ENCODE measurements at regions of chr3 and their contacts with region 1.

Region 1: GRCh38 chr3:113575206-113575605 is 42.9 kb downstream of the SIDT1 start:
- DNase-seq: no peak
- ATAC-seq: no peak
- H3K4me3 ChIP-seq: no peak overlapping the region
- H3K27ac ChIP-seq: no peak overlapping the region
- H3K4me1 ChIP-seq: peaks cover 0 to 4% of the 10 kb centered on the region in 2 experiments; a peak in 2 of 4 replicates
- H3K27me3 ChIP-seq: no peaks in the 10 kb centered on the region
- CTCF ChIP-seq: no peak
- POLR2A ChIP-seq: no peak
- RAD21 ChIP-seq: no peak

Region 2: DNA sequence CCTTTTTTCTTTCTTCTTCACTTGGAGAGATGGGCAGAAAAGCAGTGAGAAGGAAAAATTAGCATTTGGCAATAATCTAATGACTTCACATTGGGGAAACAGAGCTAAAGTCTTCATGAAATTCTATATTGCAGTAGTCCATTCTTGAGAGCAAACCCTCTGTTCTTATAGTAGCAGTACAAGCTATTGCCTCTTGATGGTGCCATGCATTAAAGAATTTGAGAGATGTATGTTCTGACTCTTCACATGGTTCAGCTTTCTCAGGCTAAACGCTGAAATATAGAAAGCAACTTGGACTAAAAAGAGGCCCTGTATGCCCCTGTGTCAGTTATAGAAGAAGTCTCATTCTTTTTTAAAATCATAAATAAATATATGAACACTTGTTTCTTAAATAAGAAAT is 1680.1 kb before region 1 on chr3:
- CTCF ChIA-PET with region 1: no interaction called
- POLR2A ChIA-PET with region 1: no interaction called
- RAD21 ChIA-PET with region 1: no interaction called
- intact Hi-C with region 1: no loop called
- DNase-seq: peak; percentile 75
- ATAC-seq: peak; percentile 82
- H3K4me3 ChIP-seq: no peak overlapping the region
- H3K27ac ChIP-seq: peak overlapping the region; percentile 58
- H3K4me1 ChIP-seq: peaks cover 23 to 73% of the 10 kb centered on the region in 2 experiments; a peak in 3 of 4 replicates
- H3K27me3 ChIP-seq: no peaks in the 10 kb centered on the region
- CTCF ChIP-seq: peak in 2 of 3 experiments; percentile 64 to 81; a peak in 4 of 6 replicates
- POLR2A ChIP-seq: no peak
- RAD21 ChIP-seq: no peak

Region 3: DNA sequence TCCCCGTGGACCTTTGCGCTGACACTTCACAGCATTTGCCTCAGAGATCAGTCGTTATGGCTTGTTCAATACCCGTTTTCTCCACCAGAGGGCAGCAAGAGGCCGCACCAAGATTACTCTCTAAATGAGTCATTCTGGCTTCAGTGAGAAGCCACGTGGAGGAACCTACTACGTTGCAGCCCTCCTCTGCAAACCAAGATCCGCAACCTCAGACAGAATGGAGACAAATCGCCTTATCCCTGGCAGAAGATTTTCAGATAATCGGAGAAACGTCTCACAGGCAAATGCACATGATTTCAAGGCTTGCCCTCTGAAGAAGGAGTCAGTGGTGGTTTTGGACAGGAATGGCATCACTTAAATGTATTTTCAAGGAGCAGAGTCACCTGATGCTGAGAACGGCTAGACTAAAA is 523.9 kb before region 1 on chr3:
- CTCF ChIA-PET with region 1: interaction called, 4 read pairs
- POLR2A ChIA-PET with region 1: no interaction called
- RAD21 ChIA-PET with region 1: no interaction called
- intact Hi-C with region 1: loop called (anchors 2 kb)
- DNase-seq: peak; percentile 71
- ATAC-seq: peak; percentile 96
- H3K4me3 ChIP-seq: no peak overlapping the region
- H3K27ac ChIP-seq: no peak overlapping the region
- H3K4me1 ChIP-seq: peaks cover 3 to 8% of the 10 kb centered on the region in 2 experiments; a peak in 2 of 4 replicates
- H3K27me3 ChIP-seq: no peaks in the 10 kb centered on the region
- CTCF ChIP-seq: peak; percentile 79 to 95 (median 91)
- POLR2A ChIP-seq: no peak
- RAD21 ChIP-seq: peak; percentile 96

Region 4: DNA sequence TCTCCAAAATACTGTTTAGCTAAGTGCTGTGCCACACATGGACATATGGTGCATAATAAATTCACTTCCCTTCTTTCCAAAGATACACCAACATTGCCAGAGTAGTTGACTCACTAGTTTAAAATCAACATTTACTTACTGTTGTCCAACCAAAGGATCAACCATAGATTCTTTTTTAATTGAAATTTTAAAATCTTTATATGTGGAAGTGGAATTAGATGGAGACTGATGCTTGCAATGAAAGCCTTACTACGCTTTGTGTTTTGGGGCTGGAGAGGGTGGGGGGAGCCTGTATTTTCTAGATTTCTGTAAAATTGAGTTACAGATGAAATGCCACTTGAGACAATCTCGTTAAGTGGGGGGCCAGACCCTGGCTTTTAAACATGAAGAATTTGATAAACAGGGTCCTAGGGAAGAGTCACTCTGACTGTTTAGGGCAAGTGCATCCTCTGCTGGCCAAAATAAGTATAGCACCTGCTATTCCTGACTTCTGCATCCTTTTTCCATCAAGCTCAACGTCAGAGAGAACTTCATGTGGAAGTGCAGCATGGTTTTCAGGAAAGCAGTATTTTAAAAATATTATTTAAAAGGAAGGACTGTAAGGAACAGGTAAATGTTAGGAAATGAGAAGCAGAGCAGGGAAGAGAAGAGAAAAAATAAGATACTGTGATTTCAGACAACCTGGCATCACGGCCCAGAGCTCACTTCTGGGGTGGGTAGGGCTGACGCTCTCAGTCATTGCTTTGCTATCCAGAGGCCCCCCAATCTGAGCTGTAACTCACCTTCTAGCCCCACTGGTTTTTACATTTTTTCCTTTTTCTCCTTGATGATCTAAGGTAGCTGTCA is 287.2 kb before region 1 on chr3:
- CTCF ChIA-PET with region 1: interaction called, 9 read pairs
- POLR2A ChIA-PET with region 1: no interaction called
- RAD21 ChIA-PET with region 1: no interaction called
- intact Hi-C with region 1: loop called (anchors 2 kb)
- DNase-seq: peak; percentile 57
- ATAC-seq: peak; percentile 66
- H3K4me3 ChIP-seq: no peak overlapping the region
- H3K27ac ChIP-seq: no peak overlapping the region
- H3K4me1 ChIP-seq: peaks cover 8 to 11% of the 10 kb centered on the region in 2 experiments; a peak in 3 of 4 replicates
- H3K27me3 ChIP-seq: no peaks in the 10 kb centered on the region
- CTCF ChIP-seq: peak; percentile 94 to 97 (median 97)
- POLR2A ChIP-seq: no peak
- RAD21 ChIP-seq: peak; percentile 96

Region 5: GRCh38 chr3:113495035-113495434 is 80.2 kb before region 1 on chr3:
- CTCF ChIA-PET with region 1: interaction called, 30 read pairs
- POLR2A ChIA-PET with region 1: no interaction called
- RAD21 ChIA-PET with region 1: interaction called in 1 of 2 experiments, 4 read pairs
- intact Hi-C with region 1: loop called (anchors 1 kb)
- DNase-seq: peak; percentile 23
- ATAC-seq: peak; percentile 53; the same call in 1 of the 2 replicates
- H3K4me3 ChIP-seq: no peak overlapping the region
- H3K27ac ChIP-seq: no peak overlapping the region
- H3K4me1 ChIP-seq: no peaks in the 10 kb centered on the region
- H3K27me3 ChIP-seq: no peaks in the 10 kb centered on the region
- CTCF ChIP-seq: peak; percentile 38 to 52 (median 48); a peak in 5 of 6 replicates
- POLR2A ChIP-seq: no peak
- RAD21 ChIP-seq: peak; percentile 51

Region 6: DNA sequence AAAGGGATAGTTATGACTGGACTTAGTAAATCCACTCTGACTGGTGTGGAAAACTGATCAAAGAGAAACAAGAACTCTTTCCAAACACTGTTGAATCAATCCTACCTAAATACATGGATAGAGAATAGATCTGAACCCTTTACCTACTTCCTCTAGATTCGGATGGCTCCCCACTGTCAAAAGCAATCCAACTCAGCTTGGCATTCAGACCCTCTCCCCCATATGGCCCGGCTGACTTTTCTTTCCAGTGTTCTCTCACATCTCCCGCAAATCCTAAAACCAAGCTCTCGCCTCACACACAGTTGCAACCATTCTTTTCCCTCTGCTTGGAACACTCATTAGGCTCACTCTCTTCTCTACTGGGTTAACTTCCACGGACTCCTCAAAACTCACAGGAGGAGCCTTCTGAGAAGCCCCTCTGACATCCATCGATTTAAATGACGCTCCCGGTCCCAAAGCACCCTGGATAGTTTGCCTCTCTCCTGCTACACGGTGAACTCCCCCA is 60.9 kb before region 1 on chr3:
- CTCF ChIA-PET with region 1: interaction called, 16 read pairs
- POLR2A ChIA-PET with region 1: interaction called, 4 read pairs
- RAD21 ChIA-PET with region 1: no interaction called
- intact Hi-C with region 1: no loop called
- DNase-seq: no peak
- ATAC-seq: no peak
- H3K4me3 ChIP-seq: peak overlapping the region; percentile 87 to 97
- H3K27ac ChIP-seq: peak overlapping the region; percentile 71
- H3K4me1 ChIP-seq: peaks cover 5 to 16% of the 10 kb centered on the region in 2 experiments; a peak in 2 of 4 replicates
- H3K27me3 ChIP-seq: no peaks in the 10 kb centered on the region
- CTCF ChIP-seq: no peak
- POLR2A ChIP-seq: no peak
- RAD21 ChIP-seq: no peak

Region 7: DNA sequence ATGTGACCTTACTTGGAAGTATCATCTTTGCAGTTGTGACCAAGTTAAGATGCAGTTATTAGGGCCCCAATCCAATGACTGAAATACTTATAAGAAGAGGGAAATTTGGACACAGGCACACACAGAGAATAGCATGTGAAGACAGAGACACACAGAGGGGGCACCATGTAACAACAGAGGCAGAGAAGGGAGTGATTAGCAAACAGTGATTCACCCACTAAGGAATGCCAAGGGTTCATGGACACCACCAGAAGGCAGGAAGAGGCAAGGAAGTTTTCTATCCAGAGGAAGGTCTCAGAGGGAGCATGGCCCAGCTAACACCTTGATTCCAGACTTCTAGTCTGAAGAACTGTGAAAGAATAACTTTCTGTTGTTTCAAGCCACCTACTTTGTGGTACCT is 17.8 kb before region 1 on chr3:
- CTCF ChIA-PET with region 1: interaction called, 11 read pairs
- POLR2A ChIA-PET with region 1: no interaction called
- RAD21 ChIA-PET with region 1: no interaction called
- intact Hi-C with region 1: no loop called
- DNase-seq: peak; percentile 16
- ATAC-seq: peak; percentile 95
- H3K4me3 ChIP-seq: no peak overlapping the region
- H3K27ac ChIP-seq: no peak overlapping the region
- H3K4me1 ChIP-seq: peaks cover 0 to 11% of the 10 kb centered on the region in 2 experiments; a peak in 2 of 4 replicates
- H3K27me3 ChIP-seq: no peaks in the 10 kb centered on the region
- CTCF ChIP-seq: peak; percentile 15 to 31 (median 26); a peak in 2 of 6 replicates
- POLR2A ChIP-seq: no peak
- RAD21 ChIP-seq: peak; percentile 41